Right ventricle myocardium superior (tissue), 1 donor: ENCODE measurements at regions of chr13 and their contacts with region 1.

Region 1: GRCh38 chr13:41668130-41668757 is 210.9 kb downstream of the RGCC start:
- DNase-seq: no peak
- ATAC-seq: peak; percentile 97

Region 2: DNA sequence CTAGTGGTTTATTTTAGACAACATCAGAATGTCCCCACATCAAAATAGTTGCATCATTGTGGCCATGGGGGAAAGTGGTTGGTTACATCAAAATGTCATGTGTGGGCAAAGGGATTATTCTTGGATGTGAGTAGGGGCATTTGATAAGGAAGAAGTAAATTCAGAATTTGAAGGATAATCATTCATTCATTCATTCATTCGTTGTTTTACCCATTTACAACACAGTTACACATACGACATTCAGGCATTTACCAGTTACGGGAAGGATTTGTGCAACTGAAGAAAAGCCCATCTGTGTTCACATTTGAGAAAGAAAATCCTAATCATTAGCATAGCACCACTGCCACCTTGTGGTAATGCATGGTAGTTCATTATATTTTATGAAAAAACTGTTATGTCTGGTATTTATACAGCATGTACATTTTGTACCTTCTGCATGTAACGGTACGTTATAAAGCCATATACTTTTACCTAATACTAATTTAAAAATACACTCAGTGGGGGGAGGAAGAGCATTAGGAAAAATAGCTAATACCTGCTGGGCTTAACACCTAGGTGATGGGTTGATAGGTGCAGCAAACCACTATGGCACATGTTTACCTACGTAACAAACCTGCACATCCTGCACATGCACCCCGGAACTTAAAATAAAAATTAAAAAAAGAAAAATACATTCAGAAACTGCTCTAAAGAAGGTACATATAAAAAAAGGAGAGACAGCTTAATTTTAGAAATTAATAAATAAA is 442.3 kb after region 1 on chr13:
- intact Hi-C with region 1: loop called (anchors 5 kb)
- DNase-seq: no peak
- ATAC-seq: peak; percentile 69